PC-9 (cell line): ENCODE measurements at regions of chr14 and their contacts with region 1.

Region 1: DNA sequence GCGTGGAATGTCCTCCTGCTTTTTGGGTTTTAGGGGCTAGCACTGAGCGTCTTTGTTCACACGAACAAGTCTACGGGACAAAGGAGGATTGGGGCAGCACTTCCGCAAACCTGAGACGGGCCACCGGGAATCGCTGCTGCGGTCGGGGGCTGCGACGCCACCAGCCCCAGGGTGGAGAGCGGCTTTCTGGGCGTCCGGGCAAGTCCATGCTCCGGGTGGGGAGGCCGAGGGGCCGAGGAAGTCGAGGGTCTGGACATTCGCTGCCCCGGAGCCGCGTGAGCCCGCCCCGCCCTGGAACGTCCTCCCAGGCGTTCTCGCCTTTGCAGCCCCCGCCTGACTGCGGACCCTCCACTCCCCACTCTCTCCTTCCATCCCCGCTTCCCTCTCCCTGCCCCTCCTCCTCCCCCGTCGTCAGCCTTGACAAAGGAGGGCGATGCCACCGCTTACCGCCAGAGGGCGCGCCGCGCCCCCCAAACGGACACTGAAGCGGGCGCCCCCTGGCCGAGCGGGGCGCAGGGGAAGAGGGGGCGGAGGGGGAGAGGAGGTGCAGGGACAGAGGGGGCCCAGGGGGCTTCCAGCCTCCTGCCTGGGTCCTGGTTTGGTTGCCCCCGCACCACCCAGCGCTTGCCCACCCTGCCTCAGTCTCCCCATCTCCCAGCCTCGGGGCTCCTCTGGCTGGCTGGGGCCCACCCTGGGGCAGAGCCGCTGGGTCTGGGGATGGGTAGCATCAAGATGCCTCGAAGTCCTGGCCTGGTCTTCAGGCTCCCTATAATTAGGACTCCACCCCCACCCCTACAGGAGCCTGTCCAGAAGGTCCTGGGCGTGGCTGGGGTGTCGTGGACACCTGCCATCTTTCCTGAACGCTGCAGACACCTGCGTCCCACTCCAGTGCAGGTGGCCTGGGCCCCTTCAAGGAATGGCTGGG is 39.1 kb upstream of the INF2 start:
- DNase-seq: peak in 1 of 2 experiments; percentile 49
- H3K4me3 ChIP-seq: no peak overlapping the region
- H3K27ac ChIP-seq: no peak overlapping the region
- H3K4me1 ChIP-seq: no peaks in the 10 kb centered on the region
- H3K27me3 ChIP-seq: peaks cover 10% of the 10 kb centered on the region
- CTCF ChIP-seq: peak; percentile 98

Region 2: DNA sequence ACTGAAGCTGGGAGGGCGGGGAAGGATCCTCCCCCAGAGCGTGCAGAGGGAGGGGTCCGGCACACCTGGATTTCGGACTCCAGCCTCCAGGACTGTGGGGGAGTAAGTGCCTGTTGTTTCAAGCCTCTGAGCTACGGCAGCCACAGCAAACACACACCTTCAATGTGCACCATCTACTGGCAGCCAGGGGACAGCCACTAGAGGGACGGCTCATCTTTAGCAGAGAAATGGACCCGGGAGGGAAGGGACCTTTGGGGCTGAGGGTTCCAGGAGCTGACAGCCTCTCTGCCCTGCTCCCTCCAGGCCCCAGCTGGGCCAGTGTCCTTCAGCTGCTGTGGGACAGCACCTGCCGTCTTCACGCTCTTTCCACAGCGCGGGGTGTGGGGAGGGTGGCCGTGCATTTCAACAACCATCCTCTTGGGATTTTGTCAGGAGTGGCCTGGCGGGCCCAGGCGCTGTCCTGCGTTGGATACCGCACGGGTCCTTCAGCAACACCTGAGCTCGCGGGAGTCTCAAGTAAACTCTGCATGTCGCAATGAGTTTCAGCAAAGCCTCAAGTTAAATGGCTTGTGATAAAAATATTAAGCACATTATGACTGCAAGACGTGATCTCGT is 280.0 kb before region 1 on chr14:
- CTCF ChIA-PET with region 1: no interaction called
- POLR2A ChIA-PET with region 1: no interaction called
- intact Hi-C with region 1: no loop called
- DNase-seq: no peak
- H3K4me3 ChIP-seq: no peak overlapping the region
- H3K27ac ChIP-seq: no peak overlapping the region
- H3K4me1 ChIP-seq: no peaks in the 10 kb centered on the region
- H3K27me3 ChIP-seq: peaks cover 92% of the 10 kb centered on the region
- CTCF ChIP-seq: no peak; the same call in 1 of the 2 replicates

Region 3: GRCh38 chr14:104424406-104425072 is 225.8 kb before region 1 on chr14:
- CTCF ChIA-PET with region 1: no interaction called
- POLR2A ChIA-PET with region 1: no interaction called
- intact Hi-C with region 1: no loop called
- DNase-seq: no peak
- H3K4me3 ChIP-seq: no peak overlapping the region
- H3K27ac ChIP-seq: no peak overlapping the region
- H3K4me1 ChIP-seq: no peaks in the 10 kb centered on the region
- H3K27me3 ChIP-seq: peaks cover 94% of the 10 kb centered on the region
- CTCF ChIP-seq: no peak

Region 4: DNA sequence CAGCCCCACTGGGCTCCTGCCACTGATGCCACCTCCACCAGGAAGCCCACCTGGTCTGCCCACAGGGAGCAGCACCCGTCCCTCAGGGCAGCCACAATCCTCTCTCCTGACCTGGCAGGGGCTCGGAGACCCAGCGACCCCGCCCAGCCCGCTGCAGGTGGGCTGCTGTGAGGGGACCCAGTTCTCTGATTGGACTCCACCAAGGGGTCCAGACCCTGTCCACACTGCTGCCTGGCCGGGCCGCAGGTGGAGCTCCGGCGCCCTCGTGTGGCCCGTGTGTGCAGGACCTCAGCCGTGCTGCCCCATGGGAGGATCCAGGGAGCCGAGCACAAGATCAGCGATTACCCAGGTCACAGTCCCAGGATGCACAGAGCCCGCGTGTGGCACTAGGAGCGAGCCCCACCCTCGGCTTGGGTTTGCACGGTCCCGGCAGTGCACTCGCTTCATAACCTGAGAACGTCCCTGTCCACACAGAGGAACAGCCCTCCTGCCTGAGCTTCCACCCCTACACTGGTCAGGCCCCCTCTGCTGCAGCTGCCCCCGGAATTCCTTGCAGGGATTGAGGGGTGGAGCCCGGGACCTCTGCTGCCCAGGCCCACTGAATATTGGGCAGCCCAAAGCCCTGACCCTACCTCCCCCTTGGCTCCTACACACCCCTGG is 10.3 kb before region 1 on chr14:
- CTCF ChIA-PET with region 1: no interaction called
- POLR2A ChIA-PET with region 1: no interaction called
- intact Hi-C with region 1: loop called (anchors 1 kb)
- DNase-seq: peak; percentile 42 to 62
- H3K4me3 ChIP-seq: no peak overlapping the region
- H3K27ac ChIP-seq: no peak overlapping the region
- H3K4me1 ChIP-seq: no peaks in the 10 kb centered on the region
- H3K27me3 ChIP-seq: peaks cover 56% of the 10 kb centered on the region
- CTCF ChIP-seq: peak; percentile 92

Region 5: GRCh38 chr14:104708606-104709268 is 58.4 kb after region 1 on chr14:
- CTCF ChIA-PET with region 1: no interaction called
- POLR2A ChIA-PET with region 1: no interaction called
- intact Hi-C with region 1: loop called (anchors 5 kb)
- DNase-seq: peak in 1 of 2 experiments; percentile 60
- H3K4me3 ChIP-seq: no peak overlapping the region
- H3K27ac ChIP-seq: no peak overlapping the region
- H3K4me1 ChIP-seq: no peaks in the 10 kb centered on the region
- H3K27me3 ChIP-seq: no peaks in the 10 kb centered on the region
- CTCF ChIP-seq: peak; percentile 98